Activated naive CD8-positive, alpha-beta T cell treated with anti-CD3 and anti-CD28 coated beads, Interleukin-2, amount 10 ng/mL, durations not matched to agents 7 days and 5 days (primary cell): ENCODE measurements at regions of chr15 and their contacts with region 1.

Region 1: GRCh38 chr15:75107908-75108838 is 84.8 kb downstream of the PPCDC start:
- DNase-seq: peak; percentile 74
- ATAC-seq: peak; percentile 81
- H3K4me3 Mint-ChIP-seq: peak overlapping the region; percentile 65
- H3K27ac Mint-ChIP-seq: peak overlapping the region; percentile 77
- H3K4me1 Mint-ChIP-seq: peaks cover 43% of the 10 kb centered on the region
- H3K27me3 Mint-ChIP-seq: peaks cover 9% of the 10 kb centered on the region

Region 2: DNA sequence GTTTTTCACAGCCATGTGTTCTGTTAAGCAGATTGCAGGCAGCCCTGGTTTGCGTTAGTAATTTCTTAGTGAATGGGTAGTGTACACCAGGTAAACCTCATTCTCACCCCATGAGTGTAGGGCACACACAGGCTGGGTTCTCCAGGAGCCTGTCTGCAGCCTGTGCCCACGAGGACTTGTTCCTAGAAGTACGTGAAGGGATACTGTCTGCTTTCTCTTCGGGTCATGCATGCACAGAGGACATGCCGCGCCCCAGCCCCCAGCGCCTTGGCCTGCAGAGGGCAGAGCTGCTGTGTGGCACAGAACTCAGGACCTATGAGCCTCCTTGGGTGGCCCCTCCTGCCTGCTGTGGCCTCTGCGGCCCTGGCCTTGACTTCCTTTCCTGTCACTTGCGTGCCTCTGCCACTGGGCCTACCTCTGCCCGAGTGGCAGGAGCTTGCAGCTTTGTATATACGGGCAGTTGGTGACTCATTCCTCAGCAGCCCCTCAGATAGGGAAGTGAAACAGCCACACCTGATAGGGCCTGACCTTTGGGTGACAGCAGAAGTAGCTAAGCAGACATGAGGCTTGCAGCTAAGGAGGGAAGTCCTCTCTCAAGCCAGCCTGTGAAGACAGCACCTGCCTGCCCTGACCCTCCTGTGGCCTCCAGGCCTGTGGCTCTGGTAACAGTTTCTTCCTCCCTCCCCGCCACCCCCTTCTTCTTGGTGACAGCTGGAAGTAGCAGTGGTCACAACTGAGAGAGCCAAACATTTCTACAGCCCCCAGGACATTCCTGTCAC is 65.3 kb before region 1 on chr15:
- POLR2A ChIA-PET with region 1: interaction called, 10 read pairs
- DNase-seq: peak; percentile 84
- ATAC-seq: peak; percentile 91
- H3K4me3 Mint-ChIP-seq: peak overlapping the region; percentile 63
- H3K27ac Mint-ChIP-seq: peak overlapping the region; percentile 91
- H3K4me1 Mint-ChIP-seq: peaks cover 69% of the 10 kb centered on the region
- H3K27me3 Mint-ChIP-seq: no peaks in the 10 kb centered on the region

Region 3: DNA sequence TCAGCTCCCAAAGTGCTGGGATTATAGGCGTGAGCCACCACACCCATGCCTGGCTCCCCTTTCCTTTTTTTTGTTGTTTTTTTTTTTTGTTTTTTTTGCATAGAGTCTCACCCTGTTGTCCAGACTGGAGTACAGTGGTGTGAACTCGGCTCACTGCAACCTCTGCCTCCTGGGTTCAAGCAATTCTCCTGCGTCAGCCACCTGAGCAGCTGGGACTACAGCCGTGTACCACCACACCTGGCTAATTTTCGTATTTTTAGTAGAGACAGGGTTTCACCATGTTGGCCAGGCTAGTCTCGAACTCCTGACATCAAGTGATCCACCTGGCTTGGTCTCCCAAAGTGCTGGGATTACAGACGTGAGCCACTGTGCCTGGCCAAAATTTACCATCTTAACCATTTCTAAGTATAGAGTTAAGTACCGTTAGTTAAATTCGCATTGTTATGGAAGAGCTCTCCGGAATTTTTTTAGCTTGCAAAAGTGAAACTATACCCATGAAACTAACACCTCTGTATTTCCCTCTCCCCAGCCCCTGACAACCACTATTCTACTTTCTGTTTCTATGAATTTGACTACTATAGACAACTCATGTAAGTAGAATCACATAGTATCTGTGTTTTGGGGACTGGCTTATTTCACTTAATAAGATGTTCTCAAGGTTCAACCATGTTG is 22.6 kb after region 1 on chr15:
- POLR2A ChIA-PET with region 1: interaction called, 12 read pairs
- DNase-seq: no peak
- ATAC-seq: peak; percentile 93
- H3K4me3 Mint-ChIP-seq: peak overlapping the region; percentile 75
- H3K27ac Mint-ChIP-seq: peak overlapping the region; percentile 97
- H3K4me1 Mint-ChIP-seq: peaks cover 37% of the 10 kb centered on the region
- H3K27me3 Mint-ChIP-seq: no peaks in the 10 kb centered on the region